ENCODE measurements at regions of chr4 and their contacts with region 1.

Region 1: DNA sequence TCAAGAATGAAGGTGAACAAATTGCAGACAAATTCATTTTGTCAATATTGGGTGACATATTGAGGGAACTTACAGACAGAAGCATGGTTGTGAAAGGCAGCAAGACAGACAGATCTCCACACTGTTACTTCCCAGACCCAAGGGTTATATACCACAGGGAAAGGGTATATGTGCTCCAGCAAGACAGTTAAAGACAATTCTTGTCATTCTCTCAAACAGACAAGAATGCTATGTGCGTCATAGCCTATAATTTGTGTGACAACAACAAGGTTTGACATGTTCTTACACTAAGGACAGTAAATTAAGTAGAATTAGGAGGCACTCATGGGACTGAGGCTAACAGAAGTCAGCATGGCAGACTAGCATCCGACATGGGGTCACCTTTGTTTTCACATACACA is 214.3 kb downstream of the INPP4B start:
- DNase-seq: no peak
- ATAC-seq: no peak
- H3K4me3 ChIP-seq: no peak overlapping the region
- H3K4me3 Mint-ChIP-seq: no peak overlapping the region
- H3K27ac ChIP-seq: no peak overlapping the region
- H3K27ac Mint-ChIP-seq: no peak overlapping the region
- H3K4me1 ChIP-seq: no peaks in the 10 kb centered on the region
- H3K4me1 Mint-ChIP-seq: peaks cover 0 to 1% (median 0%) of the 10 kb centered on the region in 7 donors
- H3K27me3 ChIP-seq: no peaks in the 10 kb centered on the region
- H3K27me3 Mint-ChIP-seq: no peaks in the 10 kb centered on the region

Region 2: DNA sequence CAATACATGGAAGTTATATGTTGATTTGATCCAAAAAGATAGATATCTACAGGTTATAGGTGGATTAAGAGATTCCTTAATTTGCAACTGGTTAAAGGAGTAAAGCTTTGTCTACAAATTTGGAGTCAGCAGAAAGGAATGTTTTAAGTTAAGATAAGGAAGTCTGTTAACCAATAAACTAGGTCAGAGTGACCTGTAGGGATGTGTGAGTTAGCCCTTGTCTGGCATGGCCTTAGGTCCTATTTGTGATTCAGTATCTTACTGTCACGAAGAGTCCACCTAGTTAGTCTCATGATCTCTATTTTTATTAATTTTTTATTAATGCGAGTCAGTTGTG is 16.6 kb before region 1 on chr4:
- CTCF ChIA-PET with region 1: interaction called, 3 read pairs
- POLR2A ChIA-PET with region 1: no interaction called
- intact Hi-C with region 1: loop called in 1 of 2 experiments (anchors 2 kb)
- DNase-seq: no peak
- ATAC-seq: no peak
- H3K4me3 ChIP-seq: no peak overlapping the region
- H3K4me3 Mint-ChIP-seq: no peak overlapping the region
- H3K27ac ChIP-seq: no peak overlapping the region
- H3K27ac Mint-ChIP-seq: peak overlapping the region in 2 of 9 donors; percentile 4 to 6
- H3K4me1 ChIP-seq: no peaks in the 10 kb centered on the region
- H3K4me1 Mint-ChIP-seq: peaks cover 0 to 8% (median 0%) of the 10 kb centered on the region in 7 donors
- H3K27me3 ChIP-seq: no peaks in the 10 kb centered on the region
- H3K27me3 Mint-ChIP-seq: no peaks in the 10 kb centered on the region

Region 3: DNA sequence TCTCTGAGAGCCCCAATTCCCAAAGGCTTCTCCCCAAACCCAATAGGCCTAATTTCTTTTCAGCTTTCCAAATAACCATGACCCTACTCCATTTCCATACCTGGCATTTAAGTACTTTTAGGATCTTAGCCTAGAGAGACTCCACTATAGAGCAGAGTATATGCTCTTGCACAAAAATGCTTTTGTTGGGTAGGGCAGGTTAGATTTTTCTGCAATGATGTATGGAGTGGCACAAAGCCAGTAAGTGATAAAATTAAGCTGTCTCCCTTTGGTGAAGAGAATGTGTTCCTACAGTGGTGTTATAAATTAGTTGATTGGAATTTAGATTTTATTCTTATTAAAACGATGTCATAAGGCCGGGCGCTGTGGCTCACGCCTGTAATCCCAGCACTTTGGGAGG is 89.4 kb after region 1 on chr4:
- CTCF ChIA-PET with region 1: no interaction called
- POLR2A ChIA-PET with region 1: no interaction called
- intact Hi-C with region 1: no loop called
- DNase-seq: no peak
- ATAC-seq: no peak
- H3K4me3 ChIP-seq: no peak overlapping the region
- H3K4me3 Mint-ChIP-seq: no peak overlapping the region
- H3K27ac ChIP-seq: no peak overlapping the region
- H3K27ac Mint-ChIP-seq: no peak overlapping the region
- H3K4me1 ChIP-seq: peaks cover 0 to 9% of the 10 kb centered on the region in 2 donors
- H3K4me1 Mint-ChIP-seq: peaks cover 3 to 37% (median 20%) of the 10 kb centered on the region in 7 donors
- H3K27me3 ChIP-seq: no peaks in the 10 kb centered on the region
- H3K27me3 Mint-ChIP-seq: no peaks in the 10 kb centered on the region

Region 4: DNA sequence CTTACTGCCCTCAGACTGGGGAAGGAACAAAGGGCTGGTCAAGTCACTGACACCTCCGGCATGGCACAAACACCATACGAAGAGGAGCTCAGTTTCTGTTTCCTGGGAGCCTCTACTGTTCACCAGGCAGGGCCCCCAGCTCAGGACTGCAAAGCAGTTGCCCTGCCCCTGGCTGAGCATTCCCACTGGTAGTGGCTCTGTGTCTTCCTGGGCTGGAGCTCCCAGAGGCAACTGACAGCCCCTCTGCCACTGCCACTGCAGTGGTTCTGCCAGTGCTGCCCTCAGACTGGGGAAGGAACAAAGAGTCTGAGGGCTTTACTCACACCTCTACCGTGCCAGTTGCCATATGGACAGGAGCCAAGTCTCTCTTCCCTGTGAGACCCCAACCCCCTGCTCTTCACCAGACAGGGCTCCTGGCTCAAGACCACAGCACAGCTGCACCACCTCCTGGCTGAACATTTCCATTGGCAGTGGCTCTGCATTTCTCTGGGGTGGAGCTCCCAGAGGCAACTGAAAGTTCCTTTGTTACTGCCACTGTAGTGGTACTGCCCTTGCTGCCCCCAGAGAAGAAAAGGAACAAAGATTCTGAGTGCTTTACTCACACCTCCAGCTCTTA is 949.6 kb after region 1 on chr4:
- CTCF ChIA-PET with region 1: no interaction called
- POLR2A ChIA-PET with region 1: no interaction called
- intact Hi-C with region 1: no loop called
- DNase-seq: no peak
- ATAC-seq: no peak
- H3K4me3 ChIP-seq: no peak overlapping the region
- H3K4me3 Mint-ChIP-seq: no peak overlapping the region
- H3K27ac ChIP-seq: no peak overlapping the region
- H3K27ac Mint-ChIP-seq: no peak overlapping the region
- H3K4me1 ChIP-seq: no peaks in the 10 kb centered on the region
- H3K4me1 Mint-ChIP-seq: no peaks in the 10 kb centered on the region
- H3K27me3 ChIP-seq: no peaks in the 10 kb centered on the region
- H3K27me3 Mint-ChIP-seq: no peaks in the 10 kb centered on the region